ENCODE measurements at regions of chr19 and their contacts with region 1.

Region 1: GRCh38 chr19:18478569-18479311 is 40.8 kb upstream of the ISYNA1 start:
- DNase-seq: peak; percentile 41
- ATAC-seq: peak; percentile 56
- H3K4me3 ChIP-seq: no peak overlapping the region
- H3K4me3 Mint-ChIP-seq: peak overlapping the region; percentile 54
- H3K27ac ChIP-seq: peak overlapping the region; percentile 21 to 65
- H3K27ac Mint-ChIP-seq: peak overlapping the region; percentile 72
- H3K4me1 ChIP-seq: peaks cover 18 to 24% of the 10 kb centered on the region in 2 donors
- H3K4me1 Mint-ChIP-seq: peaks cover 56% of the 10 kb centered on the region
- H3K27me3 ChIP-seq: no peaks in the 10 kb centered on the region
- H3K27me3 Mint-ChIP-seq: no peaks in the 10 kb centered on the region
- CTCF ChIP-seq: no peak

Region 2: DNA sequence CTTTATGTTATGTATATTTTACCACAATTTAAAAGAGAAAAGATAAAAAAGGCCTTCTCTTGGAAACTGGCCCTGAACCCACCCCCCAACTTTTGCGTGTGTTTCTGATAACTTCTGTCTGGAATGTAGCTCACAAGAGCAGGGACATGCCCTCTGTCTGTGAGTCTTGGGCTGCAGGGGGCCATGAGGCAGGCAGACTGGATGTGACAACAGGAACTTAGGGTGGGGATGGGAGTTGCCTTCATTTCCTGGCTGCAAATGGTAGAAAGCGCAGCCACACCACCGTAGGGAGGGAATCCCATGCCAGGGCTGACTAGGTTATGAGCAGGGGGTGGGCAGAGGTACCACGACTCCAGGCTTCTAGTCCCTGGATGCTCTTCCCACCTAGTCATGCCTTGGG is 1081.2 kb after region 1 on chr19:
- CTCF ChIA-PET with region 1: no interaction called
- POLR2A ChIA-PET with region 1: interaction called, 14 read pairs
- intact Hi-C with region 1: no loop called
- DNase-seq: no peak
- ATAC-seq: no peak
- H3K4me3 ChIP-seq: no peak overlapping the region
- H3K4me3 Mint-ChIP-seq: no peak overlapping the region
- H3K27ac ChIP-seq: no peak overlapping the region
- H3K27ac Mint-ChIP-seq: no peak overlapping the region
- H3K4me1 ChIP-seq: no peaks in the 10 kb centered on the region
- H3K4me1 Mint-ChIP-seq: no peaks in the 10 kb centered on the region
- H3K27me3 ChIP-seq: no peaks in the 10 kb centered on the region
- H3K27me3 Mint-ChIP-seq: no peaks in the 10 kb centered on the region
- CTCF ChIP-seq: no peak